ENCODE measurements at regions of chrX and their contacts with region 1.

Region 1: GRCh38 chrX:153599192-153600031 is 473 bp upstream of the CCNQ start:
- DNase-seq: peak; percentile 33
- ATAC-seq: peak; percentile 91
- H3K4me3 ChIP-seq: peak overlapping the region; percentile 57
- H3K27ac ChIP-seq: peak overlapping the region; percentile 48; the same call in 1 of the 2 replicates
- H3K4me1 ChIP-seq: no peaks in the 10 kb centered on the region; the same call in 1 of the 2 replicates
- H3K27me3 ChIP-seq: no peaks in the 10 kb centered on the region
- CTCF ChIP-seq: no peak
- EP300 ChIP-seq: no peak
- POLR2A ChIP-seq: no peak; the same call in 1 of the 2 replicates
- RAD21 ChIP-seq: no peak

Region 2: GRCh38 chrX:153533091-153533490 is 66.3 kb before region 1 on chrX:
- CTCF ChIA-PET with region 1: no interaction called
- POLR2A ChIA-PET with region 1: no interaction called
- RAD21 ChIA-PET with region 1: no interaction called
- SMC1A ChIA-PET with region 1: no interaction called
- in situ Hi-C with region 1: no loop called
- intact Hi-C with region 1: no loop called
- DNase-seq: no peak
- ATAC-seq: no peak
- H3K4me3 ChIP-seq: no peak overlapping the region
- H3K27ac ChIP-seq: no peak overlapping the region
- H3K4me1 ChIP-seq: no peaks in the 10 kb centered on the region
- H3K27me3 ChIP-seq: no peaks in the 10 kb centered on the region; a peak in 2 of 4 replicates
- CTCF ChIP-seq: no peak
- EP300 ChIP-seq: no peak
- POLR2A ChIP-seq: no peak
- RAD21 ChIP-seq: no peak

Region 3: GRCh38 chrX:153609917-153610428 is 10.6 kb after region 1 on chrX:
- CTCF ChIA-PET with region 1: interaction called, 18 read pairs
- POLR2A ChIA-PET with region 1: no interaction called
- RAD21 ChIA-PET with region 1: interaction called, 4 read pairs
- SMC1A ChIA-PET with region 1: interaction called, 3 read pairs
- in situ Hi-C with region 1: no loop called
- intact Hi-C with region 1: no loop called
- DNase-seq: no peak
- ATAC-seq: peak; percentile 92
- H3K4me3 ChIP-seq: no peak overlapping the region; the same call in 1 of the 2 replicates
- H3K27ac ChIP-seq: no peak overlapping the region
- H3K4me1 ChIP-seq: peaks cover 3% of the 10 kb centered on the region
- H3K27me3 ChIP-seq: no peaks in the 10 kb centered on the region; a peak in 2 of 4 replicates
- CTCF ChIP-seq: peak; percentile 51 to 80 (median 63)
- EP300 ChIP-seq: no peak
- POLR2A ChIP-seq: no peak
- RAD21 ChIP-seq: peak; percentile 55

Region 4: DNA sequence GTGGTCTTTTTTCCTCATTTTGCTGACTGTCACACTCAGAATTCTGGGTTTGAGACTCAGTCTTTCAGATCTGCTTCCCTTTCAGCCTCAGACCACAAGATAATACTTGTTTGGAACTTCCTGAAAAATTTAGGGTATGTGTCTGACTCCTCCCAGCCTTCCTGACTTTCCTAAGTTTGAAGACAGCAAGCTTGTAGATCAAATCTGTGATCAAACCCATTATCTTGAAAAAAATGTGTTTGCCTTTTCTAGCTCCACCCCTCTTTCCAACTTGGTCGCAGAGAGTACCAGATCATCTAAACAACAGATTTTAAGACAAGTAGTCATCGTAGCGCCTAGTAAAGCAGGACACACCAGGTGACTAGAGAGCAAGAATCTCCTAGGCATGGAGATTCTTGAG is 114.8 kb after region 1 on chrX:
- CTCF ChIA-PET with region 1: no interaction called
- POLR2A ChIA-PET with region 1: no interaction called
- RAD21 ChIA-PET with region 1: no interaction called
- SMC1A ChIA-PET with region 1: no interaction called
- in situ Hi-C with region 1: loop called (anchors 10 kb)
- intact Hi-C with region 1: no loop called
- DNase-seq: no peak
- ATAC-seq: no peak
- H3K4me3 ChIP-seq: no peak overlapping the region
- H3K27ac ChIP-seq: no peak overlapping the region
- H3K4me1 ChIP-seq: no peaks in the 10 kb centered on the region
- H3K27me3 ChIP-seq: no peaks in the 10 kb centered on the region
- CTCF ChIP-seq: no peak
- EP300 ChIP-seq: no peak
- POLR2A ChIP-seq: no peak
- RAD21 ChIP-seq: no peak

Region 5: GRCh38 chrX:153828723-153829548 is 229.5 kb after region 1 on chrX:
- CTCF ChIA-PET with region 1: no interaction called
- POLR2A ChIA-PET with region 1: no interaction called
- RAD21 ChIA-PET with region 1: no interaction called
- SMC1A ChIA-PET with region 1: no interaction called
- in situ Hi-C with region 1: no loop called
- intact Hi-C with region 1: no loop called
- DNase-seq: no peak
- ATAC-seq: no peak
- H3K4me3 ChIP-seq: no peak overlapping the region
- H3K27ac ChIP-seq: no peak overlapping the region
- H3K4me1 ChIP-seq: no peaks in the 10 kb centered on the region
- H3K27me3 ChIP-seq: no peaks in the 10 kb centered on the region; a peak in 2 of 4 replicates
- CTCF ChIP-seq: no peak
- EP300 ChIP-seq: no peak
- POLR2A ChIP-seq: no peak
- RAD21 ChIP-seq: no peak

Measured in GM12878 (cell line).